Activated naive CD4-positive, alpha-beta T cell treated with anti-CD3 and anti-CD28 coated beads, Interleukin-2, amount 10 ng/mL, durations not matched to agents 7 days and 5 days (primary cell): ENCODE measurements at regions of chr5 and their contacts with region 1.

Region 1: DNA sequence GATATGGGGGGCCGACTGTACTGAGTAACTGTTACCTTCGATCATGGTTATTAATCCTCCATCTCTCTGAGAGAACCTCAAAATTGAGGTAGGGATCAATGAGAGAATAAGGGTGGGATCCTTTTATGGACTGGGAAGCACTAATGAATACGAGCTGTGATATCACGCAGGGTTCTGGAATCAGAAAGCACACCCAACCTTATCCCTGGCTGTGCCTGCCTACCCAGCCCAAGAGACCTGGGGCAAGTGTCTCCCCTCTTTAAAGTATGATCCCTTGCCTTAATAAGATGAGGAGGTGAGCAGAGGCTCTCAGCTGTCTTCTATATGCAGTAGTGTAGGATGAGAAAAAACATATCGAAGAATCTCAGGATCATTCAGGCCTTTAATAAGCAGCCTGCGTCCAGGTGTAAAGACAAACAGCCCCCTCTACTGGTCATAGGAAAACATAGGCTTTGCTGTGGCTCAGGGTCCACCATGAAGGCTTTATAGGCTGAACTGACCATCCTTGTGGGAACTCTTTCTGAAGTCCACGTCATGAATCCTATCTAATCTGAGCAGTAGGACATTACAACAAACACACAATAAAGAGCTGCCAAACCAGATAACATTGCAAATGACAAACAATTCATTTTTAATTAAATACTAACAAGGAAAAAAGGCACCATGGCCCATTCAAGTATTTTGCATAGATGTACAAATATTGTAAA is 16.8 kb downstream of the NIPAL4 start:
- DNase-seq: peak; percentile 41
- H3K4me3 Mint-ChIP-seq: no peak overlapping the region
- H3K27ac Mint-ChIP-seq: peak overlapping the region; percentile 72
- H3K4me1 Mint-ChIP-seq: peaks cover 53% of the 10 kb centered on the region
- H3K27me3 Mint-ChIP-seq: no peaks in the 10 kb centered on the region

Region 2: DNA sequence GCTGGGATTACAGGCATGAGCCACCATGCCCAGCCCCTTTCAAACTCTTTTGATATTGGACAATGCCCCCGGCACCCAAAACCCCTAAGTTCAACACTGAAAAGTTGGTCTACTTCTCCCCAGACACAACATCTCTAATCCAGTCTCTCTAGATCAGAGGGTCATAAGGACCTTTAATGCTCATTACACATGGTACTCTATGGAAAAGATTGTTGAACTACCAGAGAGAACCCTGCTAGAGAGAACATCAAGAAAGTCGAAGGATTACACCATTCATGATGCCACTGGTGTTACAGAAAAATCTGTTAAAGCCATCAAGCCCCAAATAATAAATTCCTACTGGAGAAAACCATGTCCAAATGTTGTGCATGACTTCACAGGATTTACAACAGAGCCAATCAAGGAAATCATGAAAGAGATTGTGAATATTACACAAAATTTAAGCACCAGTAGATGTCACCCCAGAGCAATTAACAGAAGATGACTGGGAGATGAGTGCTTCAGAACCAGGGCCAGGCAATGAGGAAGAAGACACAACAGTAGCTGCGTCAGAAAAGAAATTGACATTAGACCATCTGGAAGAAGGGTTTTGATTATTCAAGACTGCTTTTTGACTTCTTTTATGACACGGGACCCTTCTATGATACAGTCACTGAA is 45.2 kb before region 1 on chr5:
- CTCF ChIA-PET with region 1: interaction called, 30 read pairs
- DNase-seq: peak; percentile 38
- H3K4me3 Mint-ChIP-seq: no peak overlapping the region
- H3K27ac Mint-ChIP-seq: no peak overlapping the region
- H3K4me1 Mint-ChIP-seq: peaks cover 9% of the 10 kb centered on the region
- H3K27me3 Mint-ChIP-seq: peaks cover 40% of the 10 kb centered on the region